Psoas muscle (tissue), 8 donors: ENCODE measurements at regions of chr10 and their contacts with region 1.

Region 1: GRCh38 chr10:102167861-102168260 is 15.7 kb downstream of the NOLC1 start:
- DNase-seq: no peak
- ATAC-seq: no peak
- H3K4me3 ChIP-seq: no peak overlapping the region
- H3K27ac ChIP-seq: no peak overlapping the region
- H3K4me1 ChIP-seq: peaks cover 7% of the 10 kb centered on the region
- H3K27me3 ChIP-seq: no peaks in the 10 kb centered on the region
- CTCF ChIP-seq: no peak

Region 2: GRCh38 chr10:102245101-102245931 is 77.5 kb after region 1 on chr10 and contains the start of gene GBF1:
- intact Hi-C with region 1: no loop called
- DNase-seq: peak; percentile 89 to 94
- ATAC-seq: peak; percentile 81 to 87 (median 84)
- H3K4me3 ChIP-seq: peak within 1 kb of the TSS; percentile 89
- H3K27ac ChIP-seq: peak within 1 kb of the TSS; percentile 86
- H3K4me1 ChIP-seq: peaks cover 63% of the 10 kb centered on the region
- H3K27me3 ChIP-seq: no peaks in the 10 kb centered on the region
- CTCF ChIP-seq: no peak
- total RNA-seq, gene GBF1: 40.8 to 47.1 (median 44.2) TPM

Region 3: GRCh38 chr10:102352066-102352715 is 184.3 kb after region 1 on chr10:
- intact Hi-C with region 1: loop called (anchors 1 to 5 kb)
- DNase-seq: peak; percentile 34 to 64
- ATAC-seq: peak in 3 of 4 donors; percentile 50 to 72 (median 67)
- H3K4me3 ChIP-seq: no peak overlapping the region
- H3K27ac ChIP-seq: no peak overlapping the region
- H3K4me1 ChIP-seq: peaks cover 10% of the 10 kb centered on the region
- H3K27me3 ChIP-seq: no peaks in the 10 kb centered on the region
- CTCF ChIP-seq: peak; percentile 81

Region 4: DNA sequence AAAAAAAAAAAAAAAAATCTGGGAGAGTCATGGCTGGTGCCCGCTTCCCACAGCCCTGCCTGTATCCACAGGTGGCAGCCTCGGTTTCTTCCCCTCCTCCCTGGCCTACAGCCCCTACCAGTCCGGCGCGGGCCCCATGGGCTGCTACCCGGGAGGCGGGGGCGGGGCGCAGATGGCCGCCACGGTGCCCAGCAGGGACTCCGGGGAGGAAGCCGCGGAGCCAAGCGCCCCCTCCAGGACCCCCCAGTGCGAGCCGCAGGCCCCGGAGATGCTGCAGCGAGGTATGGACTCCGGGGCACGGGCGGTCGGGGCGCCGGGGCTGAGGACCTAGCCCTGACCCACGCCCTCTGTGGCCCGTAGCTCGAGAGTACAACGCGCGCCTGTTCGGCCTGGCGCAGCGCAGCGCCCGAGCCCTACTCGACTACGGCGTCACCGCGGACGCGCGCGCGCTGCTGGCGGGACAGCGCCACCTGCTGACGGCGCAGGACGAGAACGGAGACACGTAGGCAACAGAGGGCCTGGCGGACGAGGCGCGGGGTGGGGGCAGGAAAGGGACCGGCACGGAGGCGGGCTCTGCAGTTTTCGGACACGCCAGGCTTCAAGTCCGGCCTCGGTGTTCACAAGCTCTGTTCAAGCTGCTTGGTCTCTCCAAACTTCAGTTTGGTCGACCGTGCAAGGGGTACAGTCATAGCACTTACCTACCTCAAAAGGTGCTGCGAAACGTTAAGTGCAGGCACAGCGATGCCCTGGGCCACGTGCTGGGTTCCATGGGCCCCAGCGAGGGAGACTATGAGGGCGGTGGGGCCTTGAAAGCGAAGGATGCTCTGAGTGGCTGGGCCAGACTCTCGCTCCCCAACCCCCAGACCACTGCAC is 231.6 kb after region 1 on chr10:
- intact Hi-C with region 1: loop called (anchors 5 kb)
- DNase-seq: peak; percentile 91 to 94
- ATAC-seq: peak; percentile 74 to 84 (median 78)
- H3K4me3 ChIP-seq: peak overlapping the region; percentile 76
- H3K27ac ChIP-seq: peak overlapping the region; percentile 86
- H3K4me1 ChIP-seq: peaks cover 19% of the 10 kb centered on the region
- H3K27me3 ChIP-seq: no peaks in the 10 kb centered on the region
- CTCF ChIP-seq: peak; percentile 88